Caco-2 (cell line): ENCODE measurements at regions of chrX and their contacts with region 1.

Region 1: DNA sequence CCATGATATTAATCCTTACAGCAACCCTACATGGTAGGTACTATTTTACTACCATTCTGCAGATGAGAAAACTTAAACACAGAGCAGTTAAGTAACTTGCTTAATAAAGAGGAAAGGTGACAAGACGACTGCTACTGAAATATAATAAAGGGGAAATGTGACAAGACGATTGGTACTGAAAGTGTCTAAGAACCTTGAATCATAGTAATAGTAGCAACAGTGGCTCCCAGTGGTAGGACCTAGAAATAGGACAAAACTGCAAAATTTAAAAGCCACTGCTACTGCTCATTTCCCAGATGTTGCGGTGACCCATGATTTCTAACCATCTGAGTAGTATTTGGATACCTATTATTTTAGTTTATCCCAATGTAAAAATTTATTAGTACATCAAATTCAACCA is 89.5 kb downstream of the TASL start:
- DNase-seq: no peak
- H3K4me3 ChIP-seq: no peak overlapping the region
- H3K4me3 Mint-ChIP-seq: no peak overlapping the region
- H3K27ac Mint-ChIP-seq: no peak overlapping the region
- H3K4me1 ChIP-seq: no peaks in the 10 kb centered on the region
- H3K4me1 Mint-ChIP-seq: no peaks in the 10 kb centered on the region
- H3K27me3 ChIP-seq: no peaks in the 10 kb centered on the region
- H3K27me3 Mint-ChIP-seq: no peaks in the 10 kb centered on the region
- CTCF ChIP-seq: peak in 1 of 2 experiments; percentile 5

Region 2: DNA sequence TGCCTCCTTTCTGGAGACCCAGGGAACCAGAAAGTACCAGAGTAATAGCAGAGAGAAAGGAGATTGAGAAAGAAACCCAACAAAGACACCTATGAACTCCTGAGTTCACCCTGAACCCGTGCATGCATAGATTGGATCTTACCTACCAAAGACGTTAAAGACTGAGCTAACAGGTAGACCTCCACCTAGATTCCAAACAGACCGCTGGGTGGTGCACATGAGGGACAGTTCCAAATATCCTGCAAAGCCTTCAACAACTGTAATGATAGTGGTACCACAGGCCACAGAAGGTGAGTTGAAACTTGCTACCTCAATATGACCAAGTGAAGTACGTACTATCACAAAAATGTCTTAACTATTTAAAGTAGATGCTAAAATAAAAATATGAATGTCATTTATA is 144.9 kb before region 1 on chrX:
- CTCF ChIA-PET with region 1: no interaction called
- POLR2A ChIA-PET with region 1: no interaction called
- intact Hi-C with region 1: loop called (anchors 1 kb)
- DNase-seq: peak; percentile 15 to 25
- H3K4me3 ChIP-seq: no peak overlapping the region
- H3K4me3 Mint-ChIP-seq: no peak overlapping the region
- H3K27ac Mint-ChIP-seq: no peak overlapping the region
- H3K4me1 ChIP-seq: no peaks in the 10 kb centered on the region
- H3K4me1 Mint-ChIP-seq: no peaks in the 10 kb centered on the region
- H3K27me3 ChIP-seq: no peaks in the 10 kb centered on the region
- H3K27me3 Mint-ChIP-seq: peaks cover 10% of the 10 kb centered on the region
- CTCF ChIP-seq: peak in 1 of 2 experiments; percentile 23

Region 3: DNA sequence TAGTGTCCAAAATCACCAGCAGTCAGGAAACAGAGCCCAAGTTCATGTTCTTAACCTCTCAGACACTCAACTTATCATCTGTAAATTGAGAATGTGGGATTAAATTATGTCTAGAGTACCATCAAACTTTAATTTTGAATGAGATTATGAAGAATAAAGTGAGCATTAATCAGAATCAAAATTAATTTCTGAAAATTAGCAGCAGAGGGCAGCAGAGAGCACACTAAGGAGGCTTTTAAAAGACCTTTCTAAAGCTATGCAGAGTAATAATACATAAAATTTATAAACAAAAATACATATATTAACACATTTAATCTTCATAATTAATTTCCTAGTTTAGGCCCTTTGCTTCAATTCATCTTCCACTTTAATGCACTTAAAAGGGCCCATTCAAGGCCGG is 82.4 kb after region 1 on chrX:
- CTCF ChIA-PET with region 1: no interaction called
- POLR2A ChIA-PET with region 1: no interaction called
- intact Hi-C with region 1: no loop called
- DNase-seq: peak in 1 of 2 experiments; percentile 1
- H3K4me3 ChIP-seq: no peak overlapping the region
- H3K4me3 Mint-ChIP-seq: no peak overlapping the region
- H3K27ac Mint-ChIP-seq: no peak overlapping the region
- H3K4me1 ChIP-seq: no peaks in the 10 kb centered on the region
- H3K4me1 Mint-ChIP-seq: no peaks in the 10 kb centered on the region
- H3K27me3 ChIP-seq: no peaks in the 10 kb centered on the region
- H3K27me3 Mint-ChIP-seq: no peaks in the 10 kb centered on the region
- CTCF ChIP-seq: peak; percentile 12 to 26